HepG2 (cell line): ENCODE measurements at regions of chr6 and their contacts with region 1.

Region 1: DNA sequence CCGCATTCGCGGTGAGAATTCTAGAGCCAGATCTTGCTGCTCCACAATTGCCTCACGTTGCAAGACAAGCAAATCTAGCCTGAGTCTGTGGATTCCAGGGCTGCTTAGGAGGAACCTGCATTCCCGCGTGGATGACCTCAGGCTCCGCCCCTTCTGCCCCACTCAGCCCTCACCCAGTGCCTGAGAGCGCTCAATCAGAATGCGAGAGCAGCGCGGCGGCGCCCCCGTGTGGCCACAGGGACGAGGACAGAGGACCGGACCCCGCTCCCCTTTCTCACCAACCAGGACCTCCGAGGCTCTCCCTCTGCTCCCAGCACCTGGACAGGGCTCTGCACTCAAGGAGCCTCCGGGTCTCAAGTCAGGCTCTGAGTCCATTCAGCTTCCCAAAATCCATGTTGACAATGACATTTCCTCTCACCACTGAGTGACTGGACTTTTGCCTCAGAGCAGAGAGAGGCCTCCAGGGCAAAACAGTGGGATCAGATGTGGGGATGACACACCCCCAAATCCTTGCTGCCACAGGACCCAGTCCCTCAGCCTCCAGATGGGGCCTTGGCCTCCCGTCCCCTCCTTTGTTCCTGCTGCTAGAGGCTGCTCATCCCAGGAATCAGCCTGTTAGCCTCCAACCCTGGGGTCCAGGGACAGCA is 52.0 kb downstream of the RPP21 start:
- DNase-seq: peak; percentile 58
- ATAC-seq: peak; percentile 99
- H3K4me3 ChIP-seq: no peak overlapping the region
- H3K27ac ChIP-seq: no peak overlapping the region
- H3K4me1 ChIP-seq: no peaks in the 10 kb centered on the region
- H3K27me3 ChIP-seq: peaks cover 5 to 44% of the 10 kb centered on the region in 2 experiments
- CTCF ChIP-seq: peak; percentile 99
- EP300 ChIP-seq: no peak
- POLR2A ChIP-seq: no peak
- RAD21 ChIP-seq: peak; percentile 95

Region 2: DNA sequence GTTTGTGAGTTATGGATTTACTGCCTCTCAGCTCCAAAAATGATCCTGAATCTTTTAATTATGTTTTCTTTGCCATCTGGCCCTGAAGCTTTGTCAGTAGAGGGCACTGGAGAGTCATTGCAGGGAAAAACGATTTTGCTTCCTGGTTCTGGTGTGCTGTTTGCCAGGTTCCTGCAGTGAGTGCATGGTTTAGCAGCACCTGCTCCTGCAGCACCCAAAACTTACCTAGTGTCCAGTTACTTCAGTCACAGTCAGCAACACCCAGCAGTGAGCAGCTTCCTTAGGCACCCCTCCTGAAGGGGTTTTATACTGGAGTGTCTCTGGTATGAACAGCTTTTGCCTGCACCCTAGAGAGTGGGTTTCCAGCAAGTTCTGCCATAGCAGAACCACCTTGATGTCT is 177.7 kb before region 1 on chr6:
- CTCF ChIA-PET with region 1: interaction called, 18 read pairs
- POLR2A ChIA-PET with region 1: no interaction called
- in situ Hi-C with region 1: no loop called
- intact Hi-C with region 1: loop called (anchors 1 kb)
- DNase-seq: peak; percentile 77
- ATAC-seq: peak; percentile 77
- H3K4me3 ChIP-seq: peak overlapping the region in 1 of 3 experiments; percentile 41; a peak in 1 of 6 replicates
- H3K27ac ChIP-seq: no peak overlapping the region
- H3K4me1 ChIP-seq: peaks cover 23% of the 10 kb centered on the region
- H3K27me3 ChIP-seq: no peaks in the 10 kb centered on the region
- CTCF ChIP-seq: peak; percentile 91
- EP300 ChIP-seq: no peak
- POLR2A ChIP-seq: no peak
- RAD21 ChIP-seq: peak; percentile 77

Region 3: DNA sequence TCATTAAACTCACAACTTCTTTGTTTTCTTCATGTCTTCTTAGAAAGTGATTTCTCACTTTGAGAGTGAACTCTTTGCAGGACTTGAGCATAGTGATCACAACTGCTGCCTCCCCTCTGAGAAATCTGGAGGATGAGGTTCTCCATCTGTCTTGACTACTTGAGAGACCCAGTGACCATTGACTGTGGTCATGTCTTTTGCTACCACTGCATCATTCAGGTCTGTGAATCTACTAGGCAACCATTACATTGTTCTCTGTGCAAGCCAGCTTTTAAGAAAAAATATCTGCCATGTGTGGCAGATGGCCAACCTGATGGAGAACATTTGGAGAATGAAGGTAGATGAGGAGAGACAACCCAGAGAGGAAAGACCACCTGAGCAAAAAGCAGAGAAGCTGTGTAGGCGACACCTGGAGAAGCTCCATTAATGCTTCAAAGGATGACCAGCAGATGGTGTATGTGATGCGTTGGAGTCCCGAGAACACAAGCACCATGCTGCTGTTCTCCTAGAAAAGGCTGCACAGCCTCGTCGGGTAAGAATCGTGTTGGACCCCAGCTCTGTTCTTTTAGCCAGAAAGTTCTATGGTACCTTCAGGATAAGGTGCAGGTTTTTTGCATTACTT is 158.7 kb before region 1 on chr6:
- CTCF ChIA-PET with region 1: interaction called, 15 read pairs
- POLR2A ChIA-PET with region 1: interaction called, 3 read pairs
- in situ Hi-C with region 1: loop called (anchors 5 kb)
- intact Hi-C with region 1: loop called (anchors 1 kb)
- DNase-seq: peak; percentile 60
- ATAC-seq: peak; percentile 93
- H3K4me3 ChIP-seq: no peak overlapping the region
- H3K27ac ChIP-seq: no peak overlapping the region
- H3K4me1 ChIP-seq: no peaks in the 10 kb centered on the region
- H3K27me3 ChIP-seq: peaks cover 1 to 19% of the 10 kb centered on the region in 2 experiments
- CTCF ChIP-seq: peak; percentile 86
- EP300 ChIP-seq: no peak
- POLR2A ChIP-seq: no peak
- RAD21 ChIP-seq: peak; percentile 77

Region 4: DNA sequence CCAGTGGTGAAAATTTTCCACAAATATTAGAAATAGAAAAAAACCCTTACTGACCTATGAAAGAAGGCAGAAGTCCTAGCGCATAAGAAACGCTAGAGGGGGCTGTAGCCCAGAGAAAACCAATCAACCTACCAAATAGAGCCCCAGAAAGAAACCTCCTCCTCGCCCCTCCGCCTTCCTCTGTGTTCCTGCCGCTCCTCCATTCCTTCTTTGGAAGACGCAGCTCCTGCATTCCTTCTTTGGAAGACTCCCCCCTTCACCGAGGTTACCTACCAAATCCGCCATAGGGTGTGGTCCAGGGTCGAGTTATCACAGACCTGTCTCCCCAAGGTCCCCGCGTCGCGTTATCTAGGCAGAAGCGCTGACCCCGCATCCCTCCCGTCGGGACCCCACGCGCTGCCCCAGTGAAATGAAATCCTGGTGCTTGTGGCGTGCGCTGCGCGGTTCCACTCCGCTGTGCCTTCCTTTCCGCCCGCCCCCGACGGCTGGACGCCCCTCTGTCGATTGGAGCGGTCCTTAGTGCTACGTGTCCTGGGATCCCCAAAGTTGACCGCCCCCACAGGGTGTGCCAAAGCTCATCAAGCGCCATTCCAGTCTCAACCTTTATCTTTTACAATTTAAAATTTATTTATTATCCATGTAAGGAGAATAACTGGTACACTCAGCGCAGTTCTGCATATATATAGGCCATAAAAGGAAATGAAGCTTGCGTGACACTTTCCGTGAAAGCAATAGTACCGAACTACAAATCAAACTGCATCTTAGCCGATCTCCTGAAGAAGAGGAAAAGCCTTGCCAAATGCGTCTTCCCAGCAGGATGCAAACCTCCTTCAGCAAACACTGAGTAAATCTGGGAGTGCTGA is 39.0 kb before region 1 on chr6:
- CTCF ChIA-PET with region 1: interaction called, 29 read pairs
- POLR2A ChIA-PET with region 1: no interaction called
- in situ Hi-C with region 1: loop called (anchors 5 kb)
- intact Hi-C with region 1: loop called (anchors 1 kb)
- DNase-seq: peak; percentile 60
- ATAC-seq: peak; percentile 84
- H3K4me3 ChIP-seq: peak overlapping the region in 1 of 3 experiments; percentile 42; a peak in 1 of 6 replicates
- H3K27ac ChIP-seq: no peak overlapping the region
- H3K4me1 ChIP-seq: no peaks in the 10 kb centered on the region
- H3K27me3 ChIP-seq: peaks cover 6 to 52% of the 10 kb centered on the region in 2 experiments; a peak in 4 of 5 replicates
- CTCF ChIP-seq: peak; percentile 64
- EP300 ChIP-seq: no peak
- POLR2A ChIP-seq: no peak
- RAD21 ChIP-seq: 0 out of 2 replicates have a peak, but pooled peaks have one; percentile 35

Region 5: DNA sequence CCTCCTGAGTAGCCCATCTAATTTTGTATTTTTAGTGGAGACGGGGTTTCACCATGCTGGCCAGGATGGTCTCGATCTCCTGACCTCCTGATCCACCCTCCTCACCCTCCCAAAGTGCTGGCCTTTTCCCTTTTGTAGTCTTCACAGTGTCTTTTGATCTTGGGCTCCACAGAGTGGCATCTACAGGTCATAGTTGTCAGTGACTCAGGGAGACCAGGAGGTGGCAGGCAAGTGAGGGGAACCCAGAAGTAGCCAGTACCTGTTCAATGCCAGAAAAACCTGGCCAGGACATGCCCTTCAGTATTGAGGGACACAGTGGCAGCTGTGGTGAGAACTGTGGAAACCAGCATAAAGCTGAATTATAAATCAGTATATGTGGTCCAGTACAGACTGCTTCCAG is 32.4 kb before region 1 on chr6:
- CTCF ChIA-PET with region 1: no interaction called
- POLR2A ChIA-PET with region 1: no interaction called
- in situ Hi-C with region 1: loop called (anchors 5 kb)
- intact Hi-C with region 1: no loop called
- DNase-seq: peak; percentile 17
- ATAC-seq: peak; percentile 82
- H3K4me3 ChIP-seq: no peak overlapping the region
- H3K27ac ChIP-seq: no peak overlapping the region
- H3K4me1 ChIP-seq: no peaks in the 10 kb centered on the region
- H3K27me3 ChIP-seq: peaks cover 9 to 39% of the 10 kb centered on the region in 2 experiments; a peak in 4 of 5 replicates
- CTCF ChIP-seq: peak; percentile 26; the same call in 1 of the 2 replicates
- EP300 ChIP-seq: no peak
- POLR2A ChIP-seq: no peak
- RAD21 ChIP-seq: no peak

Region 6: GRCh38 chr6:31293343-31293742 is 896.4 kb after region 1 on chr6:
- CTCF ChIA-PET with region 1: no interaction called
- POLR2A ChIA-PET with region 1: no interaction called
- in situ Hi-C with region 1: no loop called
- intact Hi-C with region 1: no loop called
- DNase-seq: peak; percentile 32
- ATAC-seq: no peak
- H3K4me3 ChIP-seq: no peak overlapping the region
- H3K27ac ChIP-seq: no peak overlapping the region
- H3K4me1 ChIP-seq: no peaks in the 10 kb centered on the region
- H3K27me3 ChIP-seq: no peaks in the 10 kb centered on the region; a peak in 1 of 5 replicates
- CTCF ChIP-seq: no peak
- EP300 ChIP-seq: no peak
- POLR2A ChIP-seq: no peak
- RAD21 ChIP-seq: no peak